ENCODE measurements at regions of chr10 and their contacts with region 1.

Region 1: DNA sequence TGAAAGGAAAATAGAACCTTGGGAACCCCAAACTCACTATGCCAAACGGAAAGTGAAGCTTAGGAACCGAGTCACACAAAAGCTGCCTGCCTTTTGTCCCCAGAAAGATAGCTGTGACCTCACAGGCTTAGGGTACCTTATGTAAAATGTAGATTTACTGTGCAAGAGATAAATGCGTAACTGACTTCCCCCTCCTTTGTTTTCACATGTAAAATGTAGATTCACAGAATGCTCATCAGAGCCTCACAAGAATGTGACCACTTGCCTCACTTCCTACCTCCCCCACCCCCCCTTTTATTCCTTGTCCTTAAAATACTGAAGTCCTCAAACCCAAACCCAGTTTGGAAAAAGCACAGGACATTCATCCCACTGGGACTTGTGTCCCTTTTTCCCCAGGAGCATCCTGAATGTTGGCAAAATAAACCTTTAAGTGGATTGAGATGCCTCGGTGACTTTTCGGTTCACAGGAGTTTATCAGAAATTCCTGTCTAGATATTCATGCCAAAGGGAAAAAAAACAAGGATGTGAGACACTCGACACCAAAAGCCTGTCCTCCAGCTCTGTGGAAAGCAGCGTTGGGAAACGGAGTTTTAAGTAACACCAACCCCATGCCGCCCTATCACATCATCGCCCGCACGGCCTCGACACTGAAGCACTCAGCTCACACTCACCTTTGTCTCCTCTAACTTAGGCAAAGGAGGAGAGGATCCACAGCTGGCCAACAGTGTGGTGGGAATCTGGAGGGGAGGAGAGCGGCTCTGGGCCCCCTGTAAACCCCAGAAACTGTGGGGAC is 45.9 kb downstream of the SVIL start:
- DNase-seq: no peak
- CTCF ChIP-seq: no peak

Region 2: GRCh38 chr10:29598851-29599311 is 10.1 kb after region 1 on chr10:
- CTCF ChIA-PET with region 1: interaction called, 25 read pairs
- POLR2A ChIA-PET with region 1: no interaction called
- DNase-seq: no peak
- CTCF ChIP-seq: no peak

Region 3: GRCh38 chr10:29608062-29608461 is 19.2 kb after region 1 on chr10:
- CTCF ChIA-PET with region 1: interaction called, 25 read pairs
- POLR2A ChIA-PET with region 1: no interaction called
- DNase-seq: no peak
- CTCF ChIP-seq: no peak

Region 4: GRCh38 chr10:29618341-29619171 is 29.7 kb after region 1 on chr10:
- CTCF ChIA-PET with region 1: interaction called, 13 read pairs
- POLR2A ChIA-PET with region 1: no interaction called
- DNase-seq: no peak
- CTCF ChIP-seq: no peak

Region 5: GRCh38 chr10:29658984-29659965 is 70.5 kb after region 1 on chr10:
- CTCF ChIA-PET with region 1: no interaction called
- POLR2A ChIA-PET with region 1: no interaction called
- DNase-seq: peak; percentile 69
- CTCF ChIP-seq: no peak

Region 6: GRCh38 chr10:29969255-29970011 is 380.6 kb after region 1 on chr10:
- CTCF ChIA-PET with region 1: no interaction called
- POLR2A ChIA-PET with region 1: no interaction called
- DNase-seq: no peak
- CTCF ChIP-seq: no peak